CD4-positive, alpha-beta T cell (primary cell): ENCODE measurements at regions of chr5 and their contacts with region 1.

Region 1: GRCh38 chr5:172878933-172879752 is 45.1 kb downstream of the ERGIC1 start:
- DNase-seq: no peak
- ATAC-seq: no peak
- H3K4me3 ChIP-seq: no peak overlapping the region
- H3K4me3 Mint-ChIP-seq: no peak overlapping the region
- H3K27ac ChIP-seq: no peak overlapping the region
- H3K27ac Mint-ChIP-seq: no peak overlapping the region
- H3K4me1 ChIP-seq: peaks cover 15% of the 10 kb centered on the region
- H3K4me1 Mint-ChIP-seq: peaks cover 17% of the 10 kb centered on the region
- H3K27me3 ChIP-seq: no peaks in the 10 kb centered on the region
- H3K27me3 Mint-ChIP-seq: no peaks in the 10 kb centered on the region
- CTCF ChIP-seq: no peak

Region 2: DNA sequence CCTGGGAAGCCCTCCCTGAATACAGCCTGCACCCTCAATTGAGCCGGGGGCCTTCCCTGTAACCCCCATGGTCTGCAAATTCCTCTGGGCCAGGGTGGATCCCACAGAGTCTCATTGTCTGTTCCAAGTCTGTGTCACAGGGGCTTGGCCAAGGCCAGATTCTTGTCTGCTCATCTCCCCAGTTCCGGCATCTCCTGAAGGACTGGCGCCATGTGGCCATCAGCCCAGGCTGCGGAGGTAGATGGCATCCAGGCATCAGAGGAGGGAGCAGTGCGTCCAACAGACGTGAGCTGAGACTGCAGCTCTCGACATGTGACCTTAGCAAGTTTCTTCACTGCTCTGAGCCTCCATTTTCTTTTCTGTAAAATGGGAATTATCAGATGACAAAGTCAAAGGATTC is 42.8 kb after region 1 on chr5:
- CTCF ChIA-PET with region 1: no interaction called
- POLR2A ChIA-PET with region 1: no interaction called
- intact Hi-C with region 1: no loop called
- DNase-seq: no peak
- ATAC-seq: no peak
- H3K4me3 ChIP-seq: no peak overlapping the region
- H3K4me3 Mint-ChIP-seq: no peak overlapping the region
- H3K27ac ChIP-seq: no peak overlapping the region
- H3K27ac Mint-ChIP-seq: no peak overlapping the region
- H3K4me1 ChIP-seq: no peaks in the 10 kb centered on the region
- H3K4me1 Mint-ChIP-seq: peaks cover 27% of the 10 kb centered on the region
- H3K27me3 ChIP-seq: no peaks in the 10 kb centered on the region
- H3K27me3 Mint-ChIP-seq: no peaks in the 10 kb centered on the region
- CTCF ChIP-seq: no peak

Region 3: DNA sequence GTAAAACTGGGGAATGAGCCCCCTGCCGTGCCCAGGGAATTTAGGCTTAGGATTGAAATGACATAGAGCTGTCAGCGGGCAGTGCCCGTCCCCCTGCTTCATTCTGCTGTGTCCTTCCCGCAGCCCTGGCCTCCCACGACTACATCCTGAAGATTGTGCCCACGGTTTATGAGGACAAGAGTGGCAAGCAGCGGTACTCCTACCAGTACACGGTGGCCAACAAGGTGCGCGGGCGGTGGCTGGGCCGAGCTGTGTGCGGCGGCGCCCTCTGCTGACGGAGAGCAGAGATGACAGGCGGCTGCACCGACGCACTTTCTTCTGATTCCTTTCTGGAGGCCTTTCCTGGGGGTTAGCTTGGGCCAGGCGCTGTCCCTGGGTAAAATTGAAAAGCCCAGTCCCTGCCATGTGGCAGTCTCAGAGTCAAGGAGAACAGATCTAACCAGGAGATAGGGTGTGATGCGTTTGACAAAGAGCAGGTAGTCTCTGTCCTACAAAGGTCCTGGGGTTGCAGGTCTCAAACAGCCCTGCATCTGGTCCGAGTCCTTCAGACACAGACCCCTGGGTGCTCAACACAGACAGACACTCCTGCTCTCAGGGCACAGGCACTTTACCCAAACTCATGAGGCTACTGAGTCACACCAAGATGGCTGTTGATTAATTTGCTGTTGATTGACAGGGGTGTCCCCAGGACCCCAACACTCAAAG is 53.3 kb after region 1 on chr5:
- CTCF ChIA-PET with region 1: no interaction called
- POLR2A ChIA-PET with region 1: no interaction called
- intact Hi-C with region 1: no loop called
- DNase-seq: peak; percentile 61 to 87 (median 70)
- ATAC-seq: peak; percentile 99
- H3K4me3 ChIP-seq: no peak overlapping the region
- H3K4me3 Mint-ChIP-seq: no peak overlapping the region
- H3K27ac ChIP-seq: no peak overlapping the region
- H3K27ac Mint-ChIP-seq: peak overlapping the region; percentile 23
- H3K4me1 ChIP-seq: peaks cover 6% of the 10 kb centered on the region
- H3K4me1 Mint-ChIP-seq: peaks cover 7% of the 10 kb centered on the region
- H3K27me3 ChIP-seq: no peaks in the 10 kb centered on the region
- H3K27me3 Mint-ChIP-seq: no peaks in the 10 kb centered on the region
- CTCF ChIP-seq: peak; percentile 87

Region 4: DNA sequence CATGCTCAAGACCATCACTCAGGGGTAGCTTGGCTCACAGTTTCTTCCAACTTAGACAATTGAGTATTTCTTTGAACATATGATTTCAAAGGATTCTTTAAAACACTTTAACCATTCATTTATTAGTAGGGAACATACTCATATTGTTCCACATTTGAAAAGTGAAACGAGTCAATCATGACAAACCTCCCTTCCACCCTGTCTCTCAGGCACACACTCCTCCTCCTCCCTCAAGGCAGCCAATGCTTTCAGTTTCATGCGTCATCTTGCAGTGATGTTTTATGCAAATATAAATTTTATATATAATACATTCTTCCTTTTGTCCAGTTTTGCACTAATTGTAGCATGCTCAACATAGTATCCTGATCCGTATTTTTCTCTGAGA is 863.3 kb after region 1 on chr5:
- CTCF ChIA-PET with region 1: no interaction called
- POLR2A ChIA-PET with region 1: no interaction called
- intact Hi-C with region 1: loop called in 1 of 2 experiments (anchors 5 kb)
- DNase-seq: peak in 3 of 14 experiments; percentile 13 to 23 (median 19)
- ATAC-seq: no peak
- H3K4me3 ChIP-seq: no peak overlapping the region
- H3K4me3 Mint-ChIP-seq: no peak overlapping the region
- H3K27ac ChIP-seq: no peak overlapping the region
- H3K27ac Mint-ChIP-seq: no peak overlapping the region
- H3K4me1 ChIP-seq: peaks cover 3% of the 10 kb centered on the region
- H3K4me1 Mint-ChIP-seq: no peaks in the 10 kb centered on the region
- H3K27me3 ChIP-seq: no peaks in the 10 kb centered on the region
- H3K27me3 Mint-ChIP-seq: no peaks in the 10 kb centered on the region
- CTCF ChIP-seq: no peak